ENCODE measurements at regions of chr21 and their contacts with region 1.

Region 1: GRCh38 chr21:45820171-45821091 is 161.1 kb upstream of the COL6A1 start:
- DNase-seq: peak; percentile 73 to 90 (median 76)
- ATAC-seq: peak; percentile 66
- H3K4me3 ChIP-seq: no peak overlapping the region
- H3K4me3 Mint-ChIP-seq: no peak overlapping the region
- H3K27ac ChIP-seq: no peak overlapping the region
- H3K27ac Mint-ChIP-seq: peak overlapping the region; percentile 28
- H3K4me1 ChIP-seq: peaks cover 17% of the 10 kb centered on the region
- H3K4me1 Mint-ChIP-seq: peaks cover 25% of the 10 kb centered on the region
- H3K27me3 ChIP-seq: no peaks in the 10 kb centered on the region
- H3K27me3 Mint-ChIP-seq: no peaks in the 10 kb centered on the region
- CTCF ChIP-seq: peak; percentile 91

Region 2: DNA sequence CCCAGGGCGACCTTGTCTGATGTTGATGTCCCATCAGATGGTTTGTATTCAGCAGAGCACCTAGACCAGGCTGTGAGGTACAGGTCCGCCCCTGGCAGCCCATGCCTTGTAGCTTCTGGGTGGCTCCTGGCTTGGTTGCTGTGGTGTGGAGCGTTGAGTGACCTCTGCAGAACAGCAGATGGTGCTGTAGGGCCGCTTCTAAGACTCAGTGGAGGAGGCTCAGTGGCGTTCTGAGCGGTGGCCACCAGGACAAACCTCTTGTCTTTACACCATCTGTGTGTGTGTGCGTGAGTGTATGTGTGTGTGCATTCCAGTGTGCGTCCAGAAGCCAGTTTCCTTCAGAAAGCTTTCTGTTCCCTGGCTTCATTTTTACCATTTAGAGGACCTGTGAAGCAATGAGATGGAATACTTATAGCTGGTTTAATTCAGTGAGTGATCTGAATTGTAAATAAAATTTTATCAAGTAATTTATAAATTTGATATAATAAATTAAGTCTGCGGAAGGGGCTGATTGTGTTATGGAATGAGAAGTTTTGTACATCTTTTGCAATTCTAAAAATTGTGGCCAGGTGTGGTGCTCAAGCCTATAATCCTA is 680.0 kb before region 1 on chr21:
- CTCF ChIA-PET with region 1: no interaction called
- POLR2A ChIA-PET with region 1: no interaction called
- intact Hi-C with region 1: loop called in 1 of 2 experiments (anchors 2 kb)
- DNase-seq: peak; percentile 30 to 83 (median 50)
- ATAC-seq: peak; percentile 93
- H3K4me3 ChIP-seq: no peak overlapping the region
- H3K4me3 Mint-ChIP-seq: no peak overlapping the region
- H3K27ac ChIP-seq: no peak overlapping the region
- H3K27ac Mint-ChIP-seq: no peak overlapping the region
- H3K4me1 ChIP-seq: peaks cover 12% of the 10 kb centered on the region
- H3K4me1 Mint-ChIP-seq: peaks cover 21% of the 10 kb centered on the region
- H3K27me3 ChIP-seq: no peaks in the 10 kb centered on the region
- H3K27me3 Mint-ChIP-seq: no peaks in the 10 kb centered on the region
- CTCF ChIP-seq: peak; percentile 48

Region 3: DNA sequence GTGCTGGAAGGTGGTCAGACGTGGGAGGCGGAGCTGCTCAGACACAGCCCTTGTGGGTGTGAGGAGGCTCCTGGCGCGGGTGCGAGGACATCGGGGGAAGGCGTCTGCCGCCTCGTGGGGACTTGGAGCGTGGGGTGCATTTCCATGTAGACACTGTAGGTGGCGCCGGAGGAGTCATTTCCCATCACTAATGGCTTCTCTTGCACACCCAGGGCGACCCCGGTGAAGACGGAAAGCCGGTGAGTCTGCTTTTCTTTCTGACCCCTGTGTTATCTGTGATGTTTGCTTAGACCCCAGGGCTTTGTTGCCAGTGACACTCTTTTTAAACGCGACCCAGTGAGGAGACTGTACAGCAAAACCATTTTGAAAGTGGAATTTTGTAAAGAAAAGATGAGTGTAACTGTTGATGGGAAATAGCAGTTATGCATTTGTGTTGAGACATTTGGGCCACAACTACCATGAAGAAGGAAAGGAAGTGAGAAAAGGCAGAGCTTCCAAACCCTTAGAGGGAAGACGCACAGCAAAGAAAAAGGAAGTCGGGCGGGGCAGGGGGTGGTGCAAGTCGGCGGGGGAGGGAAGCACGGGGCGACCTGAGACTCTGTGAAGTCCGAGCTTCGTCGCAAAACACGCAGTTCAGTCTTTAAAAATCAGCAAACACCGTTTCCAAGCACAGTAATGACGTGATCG is 342.2 kb before region 1 on chr21:
- CTCF ChIA-PET with region 1: no interaction called
- POLR2A ChIA-PET with region 1: no interaction called
- intact Hi-C with region 1: loop called (anchors 1 kb)
- DNase-seq: peak; percentile 65 to 91 (median 78)
- ATAC-seq: peak; percentile 78
- H3K4me3 ChIP-seq: peak overlapping the region; percentile 54
- H3K4me3 Mint-ChIP-seq: peak overlapping the region; percentile 83
- H3K27ac ChIP-seq: peak overlapping the region; percentile 89 to 95
- H3K27ac Mint-ChIP-seq: peak overlapping the region; percentile 95
- H3K4me1 ChIP-seq: peaks cover 79% of the 10 kb centered on the region
- H3K4me1 Mint-ChIP-seq: peaks cover 43% of the 10 kb centered on the region
- H3K27me3 ChIP-seq: no peaks in the 10 kb centered on the region
- H3K27me3 Mint-ChIP-seq: no peaks in the 10 kb centered on the region
- CTCF ChIP-seq: peak; percentile 91

Region 4: GRCh38 chr21:45596704-45597318 is 223.6 kb before region 1 on chr21:
- CTCF ChIA-PET with region 1: interaction called, 3 read pairs
- POLR2A ChIA-PET with region 1: no interaction called
- intact Hi-C with region 1: loop called in 1 of 2 experiments (anchors 2 kb)
- DNase-seq: peak; percentile 79 to 93 (median 84)
- ATAC-seq: peak; percentile 65
- H3K4me3 ChIP-seq: no peak overlapping the region
- H3K4me3 Mint-ChIP-seq: no peak overlapping the region
- H3K27ac ChIP-seq: no peak overlapping the region
- H3K27ac Mint-ChIP-seq: peak overlapping the region; percentile 67
- H3K4me1 ChIP-seq: peaks cover 26% of the 10 kb centered on the region
- H3K4me1 Mint-ChIP-seq: peaks cover 19% of the 10 kb centered on the region
- H3K27me3 ChIP-seq: no peaks in the 10 kb centered on the region
- H3K27me3 Mint-ChIP-seq: no peaks in the 10 kb centered on the region
- CTCF ChIP-seq: peak; percentile 87

Region 5: DNA sequence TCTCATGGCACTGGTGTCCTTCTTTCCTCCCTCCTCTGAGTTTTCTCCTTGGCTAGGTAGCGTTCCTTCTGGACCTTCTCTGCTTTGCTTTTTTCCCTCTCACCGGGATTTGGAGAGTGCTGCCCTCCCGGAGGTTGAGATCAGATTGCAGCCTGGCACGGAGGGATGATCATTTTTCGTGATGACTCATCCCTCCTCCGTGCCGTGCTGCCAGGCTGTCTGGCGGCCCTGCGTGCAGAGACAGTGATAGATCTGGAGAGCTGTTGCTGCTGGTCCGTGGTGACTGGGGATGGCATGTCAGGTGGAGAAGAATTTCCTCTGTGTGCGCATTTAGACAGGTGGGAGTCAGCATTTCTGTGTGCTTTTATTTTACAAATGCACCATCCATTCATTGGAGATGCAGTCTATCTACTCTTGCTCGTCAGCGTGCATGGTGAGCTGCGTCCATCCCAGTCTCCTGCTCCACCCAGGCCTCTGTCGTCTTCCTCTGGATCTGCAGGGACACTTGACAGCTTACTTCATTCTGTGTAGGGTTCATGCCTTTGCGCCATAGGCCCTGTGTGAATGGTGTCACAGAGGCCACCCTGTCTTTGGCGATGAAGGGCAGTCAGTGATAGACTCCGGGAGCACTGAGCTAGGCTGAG is 72.5 kb before region 1 on chr21:
- CTCF ChIA-PET with region 1: no interaction called
- POLR2A ChIA-PET with region 1: no interaction called
- intact Hi-C with region 1: no loop called
- DNase-seq: no peak
- ATAC-seq: no peak
- H3K4me3 ChIP-seq: no peak overlapping the region
- H3K4me3 Mint-ChIP-seq: no peak overlapping the region
- H3K27ac ChIP-seq: no peak overlapping the region
- H3K27ac Mint-ChIP-seq: no peak overlapping the region
- H3K4me1 ChIP-seq: no peaks in the 10 kb centered on the region
- H3K4me1 Mint-ChIP-seq: peaks cover 9% of the 10 kb centered on the region
- H3K27me3 ChIP-seq: no peaks in the 10 kb centered on the region
- H3K27me3 Mint-ChIP-seq: no peaks in the 10 kb centered on the region
- CTCF ChIP-seq: no peak

Region 6: GRCh38 chr21:45768751-45769070 is 51.7 kb before region 1 on chr21:
- CTCF ChIA-PET with region 1: no interaction called
- POLR2A ChIA-PET with region 1: no interaction called
- intact Hi-C with region 1: loop called in 1 of 2 experiments (anchors 10 kb)
- DNase-seq: peak in 5 of 14 experiments; percentile 15 to 42 (median 27)
- ATAC-seq: no peak
- H3K4me3 ChIP-seq: no peak overlapping the region
- H3K4me3 Mint-ChIP-seq: peak overlapping the region; percentile 77
- H3K27ac ChIP-seq: no peak overlapping the region
- H3K27ac Mint-ChIP-seq: peak overlapping the region; percentile 94
- H3K4me1 ChIP-seq: peaks cover 30% of the 10 kb centered on the region
- H3K4me1 Mint-ChIP-seq: peaks cover 49% of the 10 kb centered on the region
- H3K27me3 ChIP-seq: no peaks in the 10 kb centered on the region
- H3K27me3 Mint-ChIP-seq: no peaks in the 10 kb centered on the region
- CTCF ChIP-seq: no peak

Region 7: DNA sequence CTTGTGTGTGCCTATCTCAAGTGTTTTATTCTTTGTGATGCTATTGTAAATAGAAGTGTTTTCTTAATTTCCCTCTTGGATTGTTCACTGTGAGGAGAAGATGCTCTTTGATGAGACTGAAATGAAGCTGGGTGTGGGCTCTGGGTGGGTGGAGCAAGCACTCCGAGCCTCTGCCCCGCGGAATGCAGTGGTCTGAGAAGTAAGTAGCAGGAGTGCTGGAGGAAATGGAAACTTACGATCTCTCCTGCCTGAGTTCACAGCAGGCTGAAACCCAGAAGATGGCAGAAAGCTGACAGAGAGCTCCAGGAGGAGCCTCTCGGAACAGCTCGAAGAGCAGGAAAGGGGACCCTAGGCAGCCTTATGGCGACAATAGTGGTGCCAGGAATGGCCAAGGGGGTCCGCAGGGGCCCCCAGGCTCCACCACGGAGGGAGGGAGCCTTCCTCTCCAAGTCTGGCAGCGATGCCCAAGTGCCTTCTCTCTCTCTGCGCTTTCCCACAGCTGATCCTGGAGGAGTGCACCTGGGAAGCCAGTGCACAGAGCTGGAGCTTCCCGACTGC is 34.3 kb after region 1 on chr21:
- CTCF ChIA-PET with region 1: no interaction called
- POLR2A ChIA-PET with region 1: no interaction called
- intact Hi-C with region 1: no loop called
- DNase-seq: peak in 1 of 14 experiments; percentile 16
- ATAC-seq: no peak
- H3K4me3 ChIP-seq: no peak overlapping the region
- H3K4me3 Mint-ChIP-seq: no peak overlapping the region
- H3K27ac ChIP-seq: no peak overlapping the region
- H3K27ac Mint-ChIP-seq: no peak overlapping the region
- H3K4me1 ChIP-seq: no peaks in the 10 kb centered on the region
- H3K4me1 Mint-ChIP-seq: no peaks in the 10 kb centered on the region
- H3K27me3 ChIP-seq: no peaks in the 10 kb centered on the region
- H3K27me3 Mint-ChIP-seq: no peaks in the 10 kb centered on the region
- CTCF ChIP-seq: no peak